ENCODE measurements at regions of chr1 and their contacts with region 1.

Region 1: DNA sequence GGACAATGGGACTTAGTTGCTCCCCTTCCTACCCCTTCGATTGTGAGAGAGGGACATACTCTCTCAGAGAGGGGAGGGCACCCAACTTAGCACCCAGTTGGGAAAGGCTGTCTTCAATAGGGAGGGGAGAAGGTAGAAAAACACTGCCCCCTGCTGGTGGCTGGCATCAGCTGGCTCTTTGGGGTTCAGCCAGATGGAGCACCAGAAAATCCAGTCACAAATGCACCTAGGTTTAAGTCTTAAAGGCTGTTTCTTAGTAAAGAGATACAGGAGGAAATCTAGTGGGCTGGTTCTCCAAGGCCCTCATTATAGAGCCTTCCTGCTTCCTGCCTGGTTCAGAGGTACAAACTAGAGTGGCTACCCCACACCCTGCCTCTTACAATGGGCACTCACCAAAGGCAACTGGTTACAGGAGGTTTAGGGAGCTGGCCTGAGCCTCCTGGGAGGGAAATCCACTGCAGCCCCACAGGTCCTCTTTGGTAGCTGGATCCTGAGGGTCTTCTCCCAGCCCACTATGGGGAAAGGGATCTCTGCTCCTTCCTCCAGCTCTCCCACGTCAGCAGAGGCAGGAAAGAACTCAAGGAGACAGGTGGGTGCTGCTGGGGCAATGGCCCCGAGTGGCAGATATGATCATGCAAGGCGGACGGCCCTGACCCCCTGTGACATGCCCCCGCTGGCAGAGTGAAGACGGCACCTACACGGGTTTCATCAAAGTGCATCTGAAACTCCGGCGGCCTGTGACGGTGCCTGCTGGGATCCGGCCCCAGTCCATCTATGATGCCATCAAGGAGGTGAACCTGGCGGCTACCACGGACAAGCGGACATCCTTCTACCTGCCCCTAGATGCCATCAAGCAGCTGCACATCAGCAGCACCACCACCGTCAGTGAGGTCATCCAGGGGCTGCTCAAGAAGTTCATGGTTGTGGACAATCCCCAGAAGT is 28.3 kb downstream of the EIF2D start:
- DNase-seq: no peak
- H3K4me3 ChIP-seq: no peak overlapping the region
- H3K27me3 ChIP-seq: no peaks in the 10 kb centered on the region
- CTCF ChIP-seq: peak; percentile 90

Region 2: DNA sequence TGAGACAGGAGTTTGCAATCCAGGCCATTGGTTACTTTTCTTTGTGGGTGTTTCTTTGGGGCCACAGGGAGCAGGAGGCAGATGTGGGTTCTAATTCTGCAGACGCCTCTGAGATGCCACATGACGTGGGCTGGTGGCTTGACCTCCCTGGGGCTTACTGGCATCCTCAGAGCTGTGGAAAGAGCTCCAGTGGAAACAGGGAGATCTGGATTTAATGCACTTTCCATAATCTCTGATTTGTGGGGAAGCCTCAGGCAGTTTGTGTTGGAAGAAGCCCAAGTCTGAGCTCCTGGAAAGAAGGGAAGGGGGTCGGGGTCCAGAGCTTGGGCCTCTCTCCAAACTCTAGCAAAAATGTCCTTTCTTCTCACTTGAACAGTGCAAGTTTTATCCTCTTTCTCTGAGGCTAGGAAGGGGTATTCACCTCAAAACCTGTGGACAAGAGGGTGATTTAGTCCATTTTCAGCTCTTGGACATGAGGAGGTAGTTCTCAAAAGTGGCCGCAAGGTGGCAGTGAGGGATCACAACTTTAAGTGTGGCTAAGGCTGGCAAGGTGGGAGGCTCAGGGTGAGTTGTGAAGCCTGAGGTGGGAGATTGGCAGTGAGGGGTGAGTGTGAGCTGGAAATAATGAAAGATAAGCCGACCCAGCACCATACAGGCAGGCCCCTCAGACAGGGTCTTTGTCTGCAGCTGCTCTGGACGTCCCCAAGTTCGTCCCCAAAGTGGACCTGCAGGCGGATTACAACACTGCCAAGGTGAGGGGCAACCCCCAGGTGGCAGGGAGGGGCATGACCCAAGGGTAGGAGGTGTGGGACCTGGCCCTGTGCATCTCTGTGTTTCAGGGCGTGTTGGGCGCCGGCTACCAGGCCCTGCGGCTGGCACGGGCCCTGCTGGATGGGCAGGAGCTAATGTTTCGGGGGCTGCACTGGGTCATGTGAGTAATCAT is 104.5 kb before region 1 on chr1:
- CTCF ChIA-PET with region 1: interaction called, 38 read pairs
- POLR2A ChIA-PET with region 1: no interaction called
- DNase-seq: no peak
- H3K4me3 ChIP-seq: no peak overlapping the region
- H3K27me3 ChIP-seq: no peaks in the 10 kb centered on the region
- CTCF ChIP-seq: peak; percentile 81

Region 3: DNA sequence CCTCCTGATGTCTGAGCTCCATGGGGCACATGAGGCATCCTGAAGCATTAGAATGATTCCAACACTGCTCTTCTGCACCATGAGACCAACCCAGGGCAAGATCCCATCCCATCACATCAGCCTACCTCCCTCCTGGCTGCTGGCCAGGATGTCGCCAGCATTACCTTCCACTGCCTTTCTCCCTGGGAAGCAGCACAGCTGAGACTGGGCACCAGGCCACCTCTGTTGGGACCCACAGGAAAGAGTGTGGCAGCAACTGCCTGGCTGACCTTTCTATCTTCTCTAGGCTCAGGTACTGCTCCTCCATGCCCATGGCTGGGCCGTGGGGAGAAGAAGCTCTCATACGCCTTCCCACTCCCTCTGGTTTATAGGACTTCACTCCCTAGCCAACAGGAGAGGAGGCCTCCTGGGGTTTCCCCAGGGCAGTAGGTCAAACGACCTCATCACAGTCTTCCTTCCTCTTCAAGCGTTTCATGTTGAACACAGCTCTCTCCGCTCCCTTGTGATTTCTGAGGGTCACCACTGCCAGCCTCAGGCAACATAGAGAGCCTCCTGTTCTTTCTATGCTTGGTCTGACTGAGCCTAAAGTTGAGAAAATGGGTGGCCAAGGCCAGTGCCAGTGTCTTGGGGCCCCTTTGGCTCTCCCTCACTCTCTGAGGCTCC is 87.7 kb before region 1 on chr1:
- CTCF ChIA-PET with region 1: interaction called, 150 read pairs
- POLR2A ChIA-PET with region 1: no interaction called
- DNase-seq: no peak
- H3K4me3 ChIP-seq: no peak overlapping the region
- H3K27me3 ChIP-seq: no peaks in the 10 kb centered on the region
- CTCF ChIP-seq: no peak

Region 4: DNA sequence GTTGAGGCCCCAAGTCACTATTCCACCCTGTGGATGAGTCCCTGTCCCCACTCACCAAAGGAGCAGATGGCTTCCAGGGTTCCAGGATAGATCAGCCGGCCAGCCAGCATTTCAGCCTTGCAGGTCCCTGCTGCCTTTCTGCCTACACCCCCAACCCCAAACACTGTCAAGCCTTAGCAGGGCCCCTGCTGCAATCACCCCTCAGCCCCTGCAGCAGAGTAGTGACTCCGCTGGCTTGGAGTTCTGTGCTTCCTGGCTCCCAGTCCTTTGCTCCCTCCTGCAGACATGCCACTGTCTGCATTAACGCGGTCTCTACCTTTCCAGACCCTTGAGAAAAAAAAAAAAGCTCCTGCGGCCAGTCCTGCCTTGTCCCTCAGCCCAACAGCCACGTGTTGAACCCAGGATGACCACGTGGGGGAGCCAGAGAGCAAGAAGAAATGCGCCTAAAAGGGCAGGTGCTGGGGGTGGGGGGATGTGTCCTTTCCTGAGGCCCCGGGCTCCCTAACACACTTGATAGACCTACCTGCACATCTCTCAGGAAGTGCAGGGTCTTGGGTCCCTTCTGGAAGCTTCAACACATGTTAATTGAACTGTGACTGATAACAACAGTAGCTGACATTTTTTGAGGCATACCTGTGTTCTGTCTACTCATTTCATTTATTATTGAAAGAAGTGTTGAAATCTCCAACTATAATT is 39.3 kb before region 1 on chr1:
- CTCF ChIA-PET with region 1: interaction called, 50 read pairs
- POLR2A ChIA-PET with region 1: no interaction called
- DNase-seq: no peak
- H3K4me3 ChIP-seq: no peak overlapping the region
- H3K27me3 ChIP-seq: peaks cover 3% of the 10 kb centered on the region; the same call in 1 of the 2 replicates
- CTCF ChIP-seq: peak; percentile 94

Region 5: GRCh38 chr1:206556750-206557635 is 27.0 kb before region 1 on chr1:
- CTCF ChIA-PET with region 1: interaction called, 21 read pairs
- POLR2A ChIA-PET with region 1: no interaction called
- DNase-seq: no peak
- H3K4me3 ChIP-seq: peak overlapping the region; percentile 46
- H3K27me3 ChIP-seq: peaks cover 4% of the 10 kb centered on the region
- CTCF ChIP-seq: no peak